Right ventricle myocardium superior (tissue), 1 donor: ENCODE measurements at regions of chr16 and their contacts with region 1.

Region 1: DNA sequence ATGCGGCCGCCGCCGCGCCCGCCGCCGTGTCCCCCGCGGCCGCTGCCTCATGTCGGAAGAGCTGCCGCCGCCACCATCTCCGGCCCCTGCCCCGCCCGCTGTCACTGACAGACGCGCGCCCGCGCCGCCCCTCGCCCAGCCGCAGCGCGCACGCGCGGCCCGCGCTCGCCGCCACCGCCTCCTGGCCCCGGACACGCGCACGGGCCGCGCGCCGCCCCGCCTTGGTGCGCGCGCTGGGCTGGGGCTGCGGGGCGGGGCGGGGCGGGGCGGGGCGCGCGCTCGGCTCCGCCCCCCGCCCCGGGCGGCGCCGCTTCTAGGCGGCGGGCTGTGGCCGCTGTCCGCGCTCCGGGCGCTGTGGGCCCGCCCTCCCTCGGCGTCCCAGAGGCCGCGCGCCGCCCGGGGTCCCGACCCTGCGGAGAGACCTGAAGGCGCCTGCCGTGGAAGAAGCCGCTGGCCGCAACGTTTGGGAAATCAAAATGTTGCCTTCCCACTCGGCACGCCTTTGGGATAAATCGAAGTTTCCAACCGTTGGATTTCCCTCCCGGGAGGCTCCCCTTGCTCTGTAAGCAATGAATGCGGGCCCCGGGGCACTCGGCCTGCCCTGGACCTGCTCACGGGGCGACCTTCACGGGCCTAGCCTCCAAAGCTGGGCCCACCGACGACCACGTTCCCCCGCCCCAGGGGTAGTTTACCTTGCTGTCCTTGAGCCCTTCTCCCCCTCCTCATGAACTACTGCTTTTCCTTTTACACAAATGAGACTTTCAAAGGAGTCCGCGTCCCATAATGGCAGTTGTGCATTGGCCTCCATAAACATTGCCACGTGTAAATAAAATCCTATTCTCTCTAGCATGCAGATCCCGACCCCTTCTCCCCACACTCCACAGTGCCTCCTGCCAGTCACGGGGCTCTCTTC is at the start of gene ADCY9:
- DNase-seq: peak; percentile 90
- ATAC-seq: peak; percentile 83
- total RNA-seq, gene ADCY9: 44.8 TPM

Region 2: GRCh38 chr16:3780570-3780969 is 336.0 kb before region 1 on chr16:
- intact Hi-C with region 1: no loop called
- DNase-seq: no peak
- ATAC-seq: peak; percentile 25

Region 3: GRCh38 chr16:3999479-4000325 is 116.9 kb before region 1 on chr16:
- intact Hi-C with region 1: loop called (anchors 10 kb)
- DNase-seq: peak; percentile 76
- ATAC-seq: peak; percentile 71

Region 4: GRCh38 chr16:4253394-4254150 is 137.0 kb after region 1 on chr16:
- intact Hi-C with region 1: loop called (anchors 5 kb)
- DNase-seq: peak; percentile 100
- ATAC-seq: peak; percentile 98